ENCODE measurements at regions of chr12 and their contacts with region 1.

Region 1: GRCh38 chr12:92469837-92470236 is 233.0 kb upstream of the PLEKHG7 start:
- DNase-seq: no peak
- H3K4me3 Mint-ChIP-seq: no peak overlapping the region
- H3K27ac Mint-ChIP-seq: no peak overlapping the region
- H3K4me1 Mint-ChIP-seq: peaks cover 23% of the 10 kb centered on the region
- H3K27me3 Mint-ChIP-seq: no peaks in the 10 kb centered on the region

Region 2: GRCh38 chr12:92539113-92539749 is 69.4 kb after region 1 on chr12:
- intact Hi-C with region 1: loop called (anchors 2 kb)
- DNase-seq: no peak
- H3K4me3 Mint-ChIP-seq: no peak overlapping the region
- H3K27ac Mint-ChIP-seq: peak overlapping the region; percentile 93
- H3K4me1 Mint-ChIP-seq: peaks cover 60% of the 10 kb centered on the region
- H3K27me3 Mint-ChIP-seq: no peaks in the 10 kb centered on the region

Measured in activated T-helper 2 cell treated with anti-CD3 and anti-CD28 coated beads, Interferon-gamma antibody, Interleukin-2, Interleukin-4, amounts not matched to agents 10 μg/mL and 5 μg/mL and 100 μg/mL, durations not matched to agents 14 hours and 24 hours and 36 hours (primary cell).